Activated B cell treated with CpG ODN at 0.5 μM for 24 hours (primary cell): ENCODE measurements at regions of chr20 and their contacts with region 1.

Region 1: DNA sequence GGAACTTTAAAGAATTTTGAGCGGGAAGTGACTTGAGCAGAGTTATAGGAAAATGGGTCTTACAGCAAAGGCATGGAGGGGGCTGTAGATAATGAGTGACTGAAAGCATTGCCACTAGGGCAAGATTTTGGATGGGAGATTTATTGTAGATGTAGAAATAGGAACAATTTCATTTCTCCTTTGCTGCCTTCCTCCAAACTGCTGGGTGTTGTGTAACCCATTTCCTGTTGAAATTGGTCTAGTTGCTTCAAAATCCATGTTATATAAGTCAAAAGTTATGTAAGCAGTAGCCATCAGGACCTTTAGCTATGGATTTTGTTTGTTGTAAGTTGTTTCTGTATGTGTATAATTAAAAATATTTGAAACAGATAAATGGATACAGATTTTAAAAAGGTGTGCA is 11.1 kb downstream of the YWHAB start:
- DNase-seq: no peak
- ATAC-seq: no peak
- H3K4me3 Mint-ChIP-seq: no peak overlapping the region
- H3K27ac Mint-ChIP-seq: no peak overlapping the region
- H3K4me1 Mint-ChIP-seq: peaks cover 80% of the 10 kb centered on the region
- H3K27me3 Mint-ChIP-seq: no peaks in the 10 kb centered on the region
- CTCF ChIP-seq: no peak

Region 2: DNA sequence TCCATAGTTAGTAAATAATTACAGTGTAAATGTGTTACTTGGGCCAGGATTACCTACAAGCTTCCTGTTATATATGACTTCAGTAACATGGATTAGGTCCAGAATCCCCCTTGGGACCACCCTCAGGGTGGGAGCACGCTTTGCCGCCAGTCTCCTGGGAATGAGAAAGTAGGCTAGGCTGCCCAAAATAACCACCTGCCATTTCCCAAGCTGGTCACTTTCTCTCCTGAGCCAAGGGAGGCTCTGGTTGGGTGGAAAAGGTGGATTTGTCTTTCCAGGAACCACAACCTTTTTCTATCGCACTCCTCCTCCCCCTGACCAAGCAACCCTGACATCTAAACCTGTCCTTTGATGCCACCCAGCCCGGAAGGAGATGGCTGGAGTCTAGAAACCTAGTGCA is 76.6 kb before region 1 on chr20:
- CTCF ChIA-PET with region 1: no interaction called
- POLR2A ChIA-PET with region 1: no interaction called
- intact Hi-C with region 1: no loop called
- DNase-seq: no peak
- ATAC-seq: no peak
- H3K4me3 Mint-ChIP-seq: no peak overlapping the region
- H3K27ac Mint-ChIP-seq: no peak overlapping the region
- H3K4me1 Mint-ChIP-seq: no peaks in the 10 kb centered on the region
- H3K27me3 Mint-ChIP-seq: peaks cover 13% of the 10 kb centered on the region
- CTCF ChIP-seq: no peak

Region 3: DNA sequence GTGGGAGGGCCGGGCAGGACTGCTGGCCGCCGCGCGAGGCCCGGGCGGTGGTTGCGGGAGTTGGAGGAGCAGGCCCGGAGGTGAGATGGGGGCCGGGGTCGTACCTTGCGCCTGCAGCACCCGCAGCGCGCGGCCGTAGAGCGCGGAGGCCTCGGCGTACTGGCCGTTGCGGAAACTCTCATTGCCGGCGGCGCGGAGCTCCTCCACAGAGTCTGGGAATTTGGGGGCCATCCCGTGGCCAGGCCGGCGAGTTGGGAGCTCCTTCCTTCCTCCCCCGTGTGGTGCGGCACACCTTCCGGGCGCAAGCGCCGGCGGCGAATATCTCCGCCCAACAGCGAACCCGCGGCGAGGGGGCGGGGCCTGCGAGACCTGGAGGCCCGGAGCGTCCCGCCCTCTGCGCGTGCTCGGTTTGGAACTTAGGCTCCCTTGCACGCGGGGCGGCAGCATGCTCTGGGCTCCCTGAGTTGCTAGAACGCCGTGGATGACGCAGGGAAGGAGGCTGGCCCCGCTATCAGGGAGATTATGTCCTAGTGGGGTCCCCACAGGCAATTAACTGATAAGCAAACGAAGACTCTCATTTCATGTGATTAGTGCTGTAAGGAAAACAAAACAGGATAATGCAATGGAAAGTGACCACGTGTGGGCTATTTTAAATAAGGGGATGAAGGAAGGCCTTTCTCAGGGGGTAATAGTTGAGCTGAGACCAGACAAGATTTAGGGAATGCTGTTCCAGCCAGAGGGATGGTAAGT is 63.7 kb after region 1 on chr20 and contains the start of gene TOMM34:
- CTCF ChIA-PET with region 1: no interaction called
- POLR2A ChIA-PET with region 1: no interaction called
- intact Hi-C with region 1: loop called (anchors 2 kb)
- DNase-seq: peak; percentile 92
- ATAC-seq: peak; percentile 94
- H3K4me3 Mint-ChIP-seq: peak within 1 kb of the TSS; percentile 97
- H3K27ac Mint-ChIP-seq: peak within 1 kb of the TSS; percentile 90
- H3K4me1 Mint-ChIP-seq: peaks cover 67% of the 10 kb centered on the region
- H3K27me3 Mint-ChIP-seq: no peaks in the 10 kb centered on the region
- CTCF ChIP-seq: no peak
- total RNA-seq, gene TOMM34: 18.2 and 22.7 TPM in 2 replicates